Aorta (tissue), 5 donors: ENCODE measurements at regions of chr11 and their contacts with region 1.

Region 1: DNA sequence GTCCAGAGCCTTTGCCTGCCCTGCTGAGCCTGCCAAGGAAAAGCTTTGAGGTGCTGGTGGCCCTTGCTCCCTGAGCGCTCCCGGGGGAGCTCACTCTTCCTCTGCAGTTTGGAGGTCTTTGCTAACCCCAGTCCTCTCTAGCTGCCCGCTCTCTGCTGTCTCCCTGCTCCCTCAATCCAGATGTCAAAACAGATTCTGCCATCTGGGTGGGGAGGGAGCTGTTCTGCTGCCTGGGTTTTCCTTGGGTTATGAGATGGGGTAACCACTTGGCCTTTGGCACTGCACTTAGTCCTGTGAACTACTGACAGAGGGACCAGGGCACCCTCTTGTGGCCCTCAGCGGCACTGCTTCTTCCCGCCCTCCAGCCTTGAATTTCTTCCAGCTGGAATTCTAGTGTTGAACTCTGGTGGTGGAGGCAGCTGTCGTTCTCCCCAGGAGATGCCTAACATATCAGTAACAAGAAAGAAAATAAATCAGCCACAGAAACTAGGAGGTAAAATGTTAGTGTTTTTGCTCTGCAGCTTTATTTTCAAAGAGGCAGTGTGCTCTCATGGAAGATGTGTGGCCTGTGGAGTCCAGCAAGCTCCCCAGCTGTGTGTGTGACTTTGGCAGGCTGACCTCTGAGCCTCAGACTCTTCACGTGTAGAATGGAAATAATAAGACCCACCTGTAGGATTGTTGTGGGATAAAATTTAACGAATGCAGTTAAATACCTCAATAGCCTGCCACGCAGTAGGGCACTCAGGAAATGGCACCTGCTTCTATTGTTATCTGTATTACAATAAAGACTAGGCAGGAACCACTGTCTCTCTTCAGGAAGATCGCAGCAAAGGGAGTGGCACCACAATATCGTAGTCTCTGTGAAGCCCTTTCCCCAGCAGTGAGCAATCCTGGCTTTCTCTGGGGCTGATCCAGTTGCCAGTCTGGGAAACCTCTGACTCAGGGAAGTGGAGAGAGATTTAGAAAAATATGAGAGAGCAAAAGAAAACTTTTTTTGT is 23.4 kb downstream of the ARFGAP2 start:
- DNase-seq: peak; percentile 78 to 88
- ATAC-seq: peak; percentile 88
- H3K4me3 ChIP-seq: no peak overlapping the region
- H3K27ac ChIP-seq: no peak overlapping the region
- H3K4me1 ChIP-seq: no peaks in the 10 kb centered on the region
- H3K27me3 ChIP-seq: no peaks in the 10 kb centered on the region

Region 2: DNA sequence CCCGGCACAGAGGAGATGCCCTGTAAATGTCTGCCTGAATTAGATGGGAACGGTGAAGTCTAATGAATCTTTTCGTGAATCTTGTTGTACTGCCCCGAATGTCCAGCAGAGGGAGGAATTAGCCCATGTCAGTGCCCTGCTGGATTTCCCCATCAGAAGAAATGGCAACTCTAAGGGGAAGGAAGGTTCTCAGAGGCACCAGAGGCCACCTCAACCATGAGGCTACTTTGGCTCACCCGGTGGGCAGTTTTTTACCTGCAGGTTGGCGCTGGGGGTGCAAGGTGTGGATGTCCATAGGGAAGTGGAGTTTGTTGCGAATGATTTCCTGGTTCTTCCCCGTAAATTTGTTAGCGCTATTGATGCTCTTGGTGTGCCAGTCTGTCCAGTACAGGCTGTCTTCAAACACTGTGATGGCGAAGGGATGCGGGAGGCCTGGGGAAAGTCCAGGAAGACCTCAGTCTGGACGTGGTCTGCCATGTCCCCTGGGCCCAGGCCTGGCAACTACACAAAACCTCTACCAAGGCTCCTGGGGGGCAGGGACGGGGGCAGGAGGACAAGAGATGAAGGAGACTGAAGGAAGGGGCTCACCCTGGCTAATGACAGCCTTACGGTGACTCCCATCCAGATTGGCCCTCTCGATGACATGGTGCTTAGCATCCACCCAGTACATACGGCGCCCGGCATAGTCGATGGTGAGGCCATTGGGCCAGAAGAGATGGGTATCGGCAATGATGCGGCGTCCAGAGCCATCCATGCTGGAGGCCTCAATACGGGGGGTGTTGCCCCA is 263.4 kb before region 1 on chr11:
- intact Hi-C with region 1: loop called (anchors 2 to 5 kb)
- DNase-seq: peak; percentile 66 to 73
- ATAC-seq: peak; percentile 91
- H3K4me3 ChIP-seq: no peak overlapping the region
- H3K27ac ChIP-seq: no peak overlapping the region
- H3K4me1 ChIP-seq: no peaks in the 10 kb centered on the region
- H3K27me3 ChIP-seq: no peaks in the 10 kb centered on the region